Mammary epithelial cell (primary cell): ENCODE measurements at regions of chr19 and their contacts with region 1.

Region 1: DNA sequence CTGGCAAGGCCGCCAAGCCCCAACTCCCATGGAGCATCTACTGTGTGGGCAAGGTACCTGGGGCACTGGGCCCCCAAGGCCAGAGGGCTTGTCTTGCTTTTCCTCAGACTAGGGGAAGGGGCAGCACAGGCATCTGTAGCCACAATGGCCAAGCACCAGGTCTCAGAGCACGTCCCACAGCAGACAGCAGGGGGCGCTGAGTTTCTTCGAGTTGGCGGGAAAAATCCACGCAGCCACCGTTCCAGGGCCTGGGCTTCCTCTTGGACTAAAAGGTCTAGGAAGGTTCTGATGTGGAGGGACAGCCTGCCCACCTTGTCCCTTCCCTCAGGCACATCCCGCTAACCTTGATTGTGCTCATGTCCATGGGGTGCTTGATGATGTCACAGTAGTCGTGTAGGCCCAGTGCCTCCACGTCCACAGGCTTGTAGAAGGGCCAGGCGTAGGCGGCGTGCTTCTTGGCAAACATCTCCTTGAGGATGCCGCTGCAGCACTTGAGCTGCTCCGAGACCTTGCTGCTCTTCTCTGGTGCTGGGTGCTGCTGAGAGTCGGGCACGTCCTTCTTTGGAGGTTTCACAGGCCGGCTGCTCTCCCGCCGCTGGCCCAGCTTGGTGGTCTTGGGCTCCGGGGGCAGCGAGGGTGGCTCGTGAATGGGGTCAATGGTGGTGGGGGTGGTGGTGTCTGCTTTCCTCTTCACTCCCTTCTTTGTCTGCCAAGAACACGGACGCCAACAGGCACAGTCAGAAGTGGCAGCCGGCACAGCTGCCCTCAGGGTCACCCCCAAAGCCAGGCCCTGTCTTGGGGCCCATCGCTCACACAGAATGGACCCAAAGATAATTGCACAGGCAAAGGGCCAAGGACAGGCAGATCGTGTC is 32.0 kb upstream of the EPHX3 start:
- DNase-seq: peak; percentile 35
- H3K4me3 ChIP-seq: no peak overlapping the region
- H3K27ac ChIP-seq: no peak overlapping the region
- H3K4me1 ChIP-seq: peaks cover 7% of the 10 kb centered on the region
- H3K27me3 ChIP-seq: no peaks in the 10 kb centered on the region
- CTCF ChIP-seq: peak; percentile 66 to 81

Region 2: DNA sequence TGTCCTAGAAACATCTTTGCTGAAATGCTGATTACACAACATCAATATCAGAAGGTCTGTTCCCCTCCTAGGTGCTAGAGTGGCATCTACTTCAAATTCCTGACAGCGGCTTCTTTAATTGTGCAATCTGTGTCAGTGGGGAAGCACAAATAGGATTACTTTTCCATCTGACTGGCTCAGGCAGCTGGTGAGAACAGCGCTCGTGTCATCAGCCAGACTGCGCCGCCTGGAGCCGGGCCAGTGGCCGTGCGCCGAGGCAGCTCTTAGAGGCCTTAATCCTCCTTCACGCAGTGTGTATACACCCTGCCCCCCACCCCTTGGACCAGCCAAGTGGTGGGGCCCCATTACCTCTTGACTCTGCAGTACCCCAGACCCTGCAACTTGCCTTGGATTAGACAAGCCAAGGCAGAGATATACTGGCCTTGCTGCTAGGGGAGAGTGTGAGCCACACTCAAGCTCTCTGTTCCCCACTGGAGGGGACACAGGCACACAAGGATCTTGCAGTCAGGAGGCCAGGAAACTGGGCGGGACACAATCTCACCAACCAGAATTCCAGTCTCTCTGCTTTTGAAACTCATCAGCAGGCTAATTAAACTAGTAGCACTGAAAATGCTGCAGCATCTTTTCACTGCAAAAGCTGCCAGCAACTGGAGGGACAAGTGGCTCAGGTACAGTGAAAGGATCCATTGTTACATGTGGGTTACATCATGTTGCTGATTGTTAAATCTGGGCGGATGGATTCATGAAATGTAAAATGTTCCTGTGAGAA is 16.8 kb after region 1 on chr19:
- CTCF ChIA-PET with region 1: no interaction called
- dilution Hi-C with region 1: no loop called
- in situ Hi-C with region 1: no loop called
- intact Hi-C with region 1: loop called (anchors 2 kb)
- DNase-seq: peak; percentile 72
- H3K4me3 ChIP-seq: no peak overlapping the region
- H3K27ac ChIP-seq: peak overlapping the region; percentile 33
- H3K4me1 ChIP-seq: peaks cover 69% of the 10 kb centered on the region
- H3K27me3 ChIP-seq: no peaks in the 10 kb centered on the region
- CTCF ChIP-seq: peak in 1 of 2 donors; percentile 46

Region 3: DNA sequence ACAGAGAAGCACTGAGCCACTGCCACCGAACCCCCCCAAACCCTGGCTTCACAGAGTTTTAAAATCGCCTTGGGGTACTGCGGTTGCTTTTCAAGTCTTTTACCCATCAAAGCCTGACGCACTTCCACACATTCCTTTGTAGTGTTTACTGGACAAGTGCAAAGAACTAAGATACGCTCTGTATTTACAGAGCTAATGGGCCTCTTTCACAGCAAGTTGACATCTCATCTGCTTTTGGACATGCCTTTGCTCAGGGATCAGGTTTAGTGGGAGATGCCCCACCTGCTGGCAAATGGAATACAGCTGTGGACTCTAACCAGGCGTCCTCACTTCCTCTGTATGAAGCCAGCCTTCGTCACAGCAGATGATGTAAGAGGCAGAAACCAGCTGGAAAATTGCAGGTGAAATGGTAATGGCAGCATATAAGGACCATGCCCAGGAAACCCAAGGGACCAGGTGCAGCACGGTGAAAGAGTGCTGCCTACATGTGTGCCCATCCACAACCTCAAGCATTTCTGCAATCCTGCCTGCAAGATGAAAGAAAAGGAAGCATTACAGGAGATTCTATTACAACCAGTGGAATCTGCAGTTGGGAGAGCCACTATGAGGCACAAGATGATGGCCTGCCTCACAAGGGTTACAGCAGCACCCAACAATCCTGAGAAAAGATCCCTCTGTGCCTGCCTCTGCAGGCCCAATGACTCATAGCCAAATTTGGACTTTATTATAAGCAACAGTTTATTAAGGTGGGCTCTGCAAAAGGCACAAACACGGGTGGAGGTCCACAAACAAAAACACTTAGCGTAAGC is 33.3 kb after region 1 on chr19:
- CTCF ChIA-PET with region 1: no interaction called
- dilution Hi-C with region 1: no loop called
- in situ Hi-C with region 1: no loop called
- intact Hi-C with region 1: loop called (anchors 1 kb)
- DNase-seq: peak; percentile 65
- H3K4me3 ChIP-seq: no peak overlapping the region
- H3K27ac ChIP-seq: peak overlapping the region; percentile 19
- H3K4me1 ChIP-seq: peaks cover 67% of the 10 kb centered on the region
- H3K27me3 ChIP-seq: no peaks in the 10 kb centered on the region
- CTCF ChIP-seq: peak in 1 of 2 donors; percentile 44

Region 4: DNA sequence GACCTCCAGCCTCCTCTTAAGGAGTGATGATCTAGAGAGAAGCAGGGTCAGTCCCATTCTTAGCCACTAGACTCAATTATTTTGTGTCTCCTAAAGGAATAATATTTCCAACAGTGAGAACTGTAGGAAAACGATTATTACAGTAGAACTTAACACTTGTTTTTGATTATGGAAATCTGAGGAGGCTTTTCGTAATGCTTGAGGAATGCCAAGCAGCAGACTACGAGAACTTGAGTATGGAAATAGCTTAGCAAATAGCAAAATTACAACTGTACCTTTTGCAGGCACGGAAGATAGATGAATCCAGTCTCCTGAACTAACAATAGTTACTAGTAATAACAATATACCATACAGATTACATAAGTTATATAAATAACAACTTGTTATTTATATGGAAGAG is 55.8 kb after region 1 on chr19:
- CTCF ChIA-PET with region 1: no interaction called
- dilution Hi-C with region 1: no loop called
- in situ Hi-C with region 1: no loop called
- intact Hi-C with region 1: no loop called
- DNase-seq: no peak
- H3K4me3 ChIP-seq: no peak overlapping the region
- H3K27ac ChIP-seq: no peak overlapping the region
- H3K4me1 ChIP-seq: peaks cover 26% of the 10 kb centered on the region
- H3K27me3 ChIP-seq: no peaks in the 10 kb centered on the region
- CTCF ChIP-seq: no peak

Region 5: GRCh38 chr19:15332311-15332996 is 68.2 kb after region 1 on chr19 and contains the start of gene BRD4:
- CTCF ChIA-PET with region 1: no interaction called
- dilution Hi-C with region 1: no loop called
- in situ Hi-C with region 1: no loop called
- intact Hi-C with region 1: loop called (anchors 1 kb)
- DNase-seq: peak; percentile 35
- H3K4me3 ChIP-seq: peak within 1 kb of the TSS; percentile 89 to 96 (median 94)
- H3K27ac ChIP-seq: peak within 1 kb of the TSS; percentile 86
- H3K4me1 ChIP-seq: peaks cover 9% of the 10 kb centered on the region
- H3K27me3 ChIP-seq: no peaks in the 10 kb centered on the region
- CTCF ChIP-seq: no peak
- total RNA-seq, gene BRD4: 22.2 to 113 TPM

Region 6: DNA sequence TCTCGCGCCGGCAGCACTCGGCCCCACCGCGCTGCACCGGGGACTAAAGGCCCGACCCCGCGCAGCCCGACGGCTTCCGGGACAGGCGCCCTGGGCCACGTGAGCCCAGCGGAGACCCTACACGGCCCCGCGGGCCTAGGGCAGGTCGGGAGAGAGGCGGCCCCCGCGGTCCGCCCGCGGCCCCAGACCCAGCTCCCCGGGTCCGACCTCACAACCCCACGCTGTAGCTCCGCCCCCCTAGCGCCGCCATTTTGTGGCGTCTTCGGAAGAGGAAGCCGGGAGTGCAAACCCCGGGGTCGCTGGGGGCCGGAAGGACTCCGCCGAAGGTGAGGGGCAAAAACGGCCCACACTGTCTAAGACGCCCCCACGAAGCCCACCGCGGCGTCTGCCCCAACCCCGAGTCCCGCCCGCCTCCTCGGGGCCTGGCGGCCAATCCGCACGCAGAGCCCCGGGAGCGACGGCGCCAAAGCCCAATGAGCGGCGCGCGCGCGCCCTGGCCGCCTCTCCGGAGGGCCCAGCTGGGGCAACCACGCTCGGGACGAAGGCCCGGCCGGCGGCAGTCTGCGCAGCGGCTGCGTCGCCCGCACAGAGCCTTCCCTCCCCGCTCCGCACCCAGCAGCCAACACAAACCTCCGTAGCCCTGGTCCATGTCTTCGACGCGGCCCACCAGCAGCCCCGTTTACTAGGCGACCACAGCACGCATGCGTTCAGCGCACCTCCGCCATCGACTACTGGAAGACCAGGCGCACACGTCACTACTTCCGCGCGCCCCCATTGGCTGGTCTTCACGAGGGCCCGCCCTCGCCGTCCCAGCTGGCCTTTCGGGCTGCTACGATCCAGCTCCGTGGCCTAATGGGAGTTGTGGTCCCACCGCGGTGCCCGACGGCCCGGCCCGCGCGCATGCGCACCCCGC is 115.0 kb after region 1 on chr19 and contains the start of gene AKAP8:
- CTCF ChIA-PET with region 1: no interaction called
- dilution Hi-C with region 1: no loop called
- in situ Hi-C with region 1: no loop called
- intact Hi-C with region 1: loop called (anchors 1 kb)
- DNase-seq: peak; percentile 99
- H3K4me3 ChIP-seq: peak within 1 kb of the TSS; percentile 88 to 100 (median 91)
- H3K27ac ChIP-seq: peak within 1 kb of the TSS; percentile 86
- H3K4me1 ChIP-seq: peaks cover 24% of the 10 kb centered on the region
- H3K27me3 ChIP-seq: no peaks in the 10 kb centered on the region
- CTCF ChIP-seq: no peak
- total RNA-seq, gene AKAP8: 12.8 to 33.2 TPM

Region 7: DNA sequence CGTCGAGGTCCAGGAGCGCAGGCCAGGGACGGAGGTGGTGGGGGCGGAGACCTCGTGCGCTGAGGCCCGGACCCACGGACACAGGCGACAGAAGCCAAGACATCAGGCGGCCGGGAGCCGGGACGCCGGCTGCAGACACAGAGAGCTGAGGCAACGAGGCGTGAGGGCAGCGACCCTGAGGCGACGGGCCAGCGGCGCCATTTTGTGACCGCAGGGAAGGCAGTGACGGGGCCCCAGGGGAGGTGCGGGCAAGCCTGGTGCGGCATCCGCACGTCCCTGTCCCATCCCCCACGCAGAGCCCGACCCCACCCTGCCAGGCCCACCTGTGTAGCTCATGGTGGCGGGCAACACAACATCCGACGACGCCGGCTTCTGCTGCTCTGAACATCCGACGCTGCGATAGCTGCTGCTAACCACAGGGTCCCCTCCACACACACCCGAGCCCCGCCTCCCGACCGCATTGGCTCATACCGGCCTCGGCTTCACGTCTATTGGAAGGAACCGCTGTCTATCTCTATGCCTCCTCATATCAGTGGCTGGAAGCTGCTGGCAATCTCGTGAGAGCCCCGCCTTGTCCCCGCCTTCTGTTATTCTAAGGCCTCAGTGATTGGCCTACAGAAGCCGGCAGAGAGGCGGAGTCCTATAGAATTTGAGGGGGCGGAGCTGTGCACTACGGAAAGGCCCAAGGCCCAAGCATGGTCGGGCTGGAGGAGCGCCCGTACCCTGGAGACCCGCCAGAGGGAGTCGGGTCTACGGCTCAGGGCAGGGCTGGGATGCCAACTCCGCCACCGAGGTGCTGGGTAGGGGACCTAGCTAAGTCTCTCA is 154.5 kb after region 1 on chr19 and contains the start of gene AKAP8L:
- CTCF ChIA-PET with region 1: no interaction called
- dilution Hi-C with region 1: no loop called
- in situ Hi-C with region 1: no loop called
- intact Hi-C with region 1: loop called (anchors 2 kb)
- DNase-seq: peak; percentile 99
- H3K4me3 ChIP-seq: peak within 1 kb of the TSS; percentile 80 to 99 (median 92)
- H3K27ac ChIP-seq: peak within 1 kb of the TSS; percentile 60
- H3K4me1 ChIP-seq: peaks cover 23% of the 10 kb centered on the region
- H3K27me3 ChIP-seq: no peaks in the 10 kb centered on the region
- CTCF ChIP-seq: peak; percentile 51 to 77
- total RNA-seq, gene AKAP8L: 55.0 to 75.9 TPM